Colonic mucosa (tissue), 4 donors: ENCODE measurements at regions of chr3 and their contacts with region 1.

Region 1: DNA sequence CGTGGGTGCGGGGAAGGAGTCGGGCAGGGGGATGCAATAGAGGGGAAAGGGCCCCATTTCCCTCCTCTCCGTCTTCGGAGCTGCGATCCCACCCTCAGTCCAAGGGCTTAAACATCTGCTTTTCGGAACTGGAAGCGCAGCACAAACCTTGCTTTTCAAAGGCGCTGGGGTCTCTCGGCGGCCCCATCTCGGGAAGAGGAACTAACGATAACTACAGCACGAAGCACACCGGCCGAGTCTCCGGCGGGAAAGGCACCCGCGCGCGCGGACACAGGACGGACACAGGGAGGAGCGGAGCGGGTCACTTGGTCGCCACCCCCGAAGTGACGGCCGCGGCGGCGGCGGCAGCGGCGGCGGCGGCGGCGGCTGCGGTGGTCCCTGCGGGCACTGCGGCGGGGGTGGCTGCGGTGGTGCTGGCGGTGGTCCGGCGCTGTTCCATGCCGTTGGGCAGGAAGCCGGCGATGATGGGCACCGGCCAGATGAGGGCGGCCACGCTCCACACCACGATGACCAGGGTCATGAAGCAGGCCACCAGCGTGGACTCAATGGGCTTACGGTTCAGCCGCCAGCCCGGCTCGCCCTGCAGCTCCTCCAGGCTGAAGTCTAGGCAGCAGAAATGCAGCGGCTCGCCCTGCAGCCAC is 1.1 kb downstream of the TMEM158 start:
- DNase-seq: peak; percentile 75
- H3K4me3 ChIP-seq: peak overlapping the region; percentile 37
- H3K27ac ChIP-seq: peak overlapping the region; percentile 3
- H3K4me1 ChIP-seq: peaks cover 4% of the 10 kb centered on the region
- H3K27me3 ChIP-seq: peaks cover 20% of the 10 kb centered on the region
- CTCF ChIP-seq: peak; percentile 19

Region 2: GRCh38 chr3:45145681-45146614 is 79.0 kb before region 1 on chr3 and contains the start of gene CDCP1:
- intact Hi-C with region 1: no loop called
- DNase-seq: peak; percentile 83
- H3K4me3 ChIP-seq: peak within 1 kb of the TSS; percentile 58
- H3K27ac ChIP-seq: peak within 1 kb of the TSS; percentile 87
- H3K4me1 ChIP-seq: no peaks in the 10 kb centered on the region
- H3K27me3 ChIP-seq: peaks cover 4% of the 10 kb centered on the region
- CTCF ChIP-seq: no peak
- total RNA-seq, gene CDCP1: 84.5 to 107 TPM

Region 3: GRCh38 chr3:45499529-45499928 is 274.6 kb after region 1 on chr3:
- intact Hi-C with region 1: loop called (anchors 5 kb)
- DNase-seq: no peak
- H3K4me3 ChIP-seq: no peak overlapping the region
- H3K27ac ChIP-seq: no peak overlapping the region
- H3K4me1 ChIP-seq: no peaks in the 10 kb centered on the region
- H3K27me3 ChIP-seq: no peaks in the 10 kb centered on the region
- CTCF ChIP-seq: peak; percentile 26